CD14-positive monocyte (primary cell): ENCODE measurements at regions of chr17 and their contacts with region 1.

Region 1: GRCh38 chr17:16456742-16457316 is 35.2 kb downstream of the LRRC75A start:
- DNase-seq: no peak
- H3K4me3 ChIP-seq: no peak overlapping the region
- H3K4me3 Mint-ChIP-seq: no peak overlapping the region
- H3K27ac ChIP-seq: no peak overlapping the region
- H3K27ac Mint-ChIP-seq: peak overlapping the region in 1 of 7 donors; percentile 26
- H3K4me1 ChIP-seq: no peaks in the 10 kb centered on the region
- H3K4me1 Mint-ChIP-seq: peaks cover 13% of the 10 kb centered on the region
- H3K27me3 ChIP-seq: no peaks in the 10 kb centered on the region
- H3K27me3 Mint-ChIP-seq: no peaks in the 10 kb centered on the region
- CTCF ChIP-seq: no peak

Region 2: GRCh38 chr17:16521070-16521727 is 64.4 kb after region 1 on chr17:
- intact Hi-C with region 1: loop called (anchors 2 to 5 kb)
- DNase-seq: peak; percentile 82 to 89 (median 86)
- H3K4me3 ChIP-seq: no peak overlapping the region
- H3K4me3 Mint-ChIP-seq: no peak overlapping the region
- H3K27ac ChIP-seq: peak overlapping the region in 1 of 2 donors; percentile 66
- H3K27ac Mint-ChIP-seq: peak overlapping the region; percentile 42 to 93 (median 86)
- H3K4me1 ChIP-seq: peaks cover 11 to 19% of the 10 kb centered on the region in 2 donors
- H3K4me1 Mint-ChIP-seq: peaks cover 18% of the 10 kb centered on the region
- H3K27me3 ChIP-seq: no peaks in the 10 kb centered on the region
- H3K27me3 Mint-ChIP-seq: peaks cover 5 to 11% (median 9%) of the 10 kb centered on the region in 3 donors
- CTCF ChIP-seq: peak; percentile 90

Region 3: DNA sequence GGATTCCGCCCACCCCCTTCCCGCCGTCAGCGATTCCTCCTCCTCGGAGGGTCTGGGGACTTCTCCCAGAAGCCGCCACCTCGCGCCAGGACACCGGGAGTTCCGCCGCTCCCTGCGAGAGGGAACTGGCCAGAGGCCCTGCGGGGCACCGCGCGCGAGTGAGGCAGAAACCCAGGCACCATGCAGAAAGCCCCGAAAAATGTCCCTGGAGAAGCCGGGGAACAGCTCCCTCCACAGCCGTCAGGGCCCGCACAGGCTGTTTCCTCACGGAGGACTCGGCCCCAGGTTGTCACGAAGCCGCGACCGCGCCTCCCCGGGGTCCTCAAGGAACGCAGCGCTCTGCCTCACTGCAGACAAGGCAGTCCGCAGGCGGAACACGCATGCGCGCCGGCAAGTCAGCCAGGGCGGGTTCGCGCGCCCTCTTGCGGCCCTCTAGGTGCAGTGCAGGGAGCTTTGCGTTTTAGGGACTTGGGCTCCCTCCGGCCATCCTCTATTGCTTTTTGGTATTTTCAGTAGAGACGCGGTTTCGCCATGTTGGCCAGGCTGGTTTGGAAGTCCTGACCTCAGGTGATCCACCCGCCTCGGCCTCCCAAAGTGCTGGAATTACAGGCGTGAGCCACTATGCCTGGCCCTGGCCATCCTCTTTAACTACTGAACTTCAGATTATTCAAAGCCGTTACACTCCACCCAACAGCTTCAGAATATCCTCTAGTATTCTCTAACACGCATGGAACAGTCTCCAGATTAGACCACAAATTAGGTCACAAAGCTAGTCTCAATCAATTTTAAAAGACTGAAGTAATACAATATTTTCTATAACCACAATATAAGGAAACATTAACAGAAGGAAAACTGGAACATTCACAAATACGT is 132.5 kb after region 1 on chr17:
- intact Hi-C with region 1: loop called in 1 of 2 experiments (anchors 10 kb)
- DNase-seq: peak; percentile 82 to 91 (median 88)
- H3K4me3 ChIP-seq: peak overlapping the region; percentile 28 to 77 (median 56)
- H3K4me3 Mint-ChIP-seq: peak overlapping the region; percentile 74 to 84
- H3K27ac ChIP-seq: no peak overlapping the region
- H3K27ac Mint-ChIP-seq: no peak overlapping the region
- H3K4me1 ChIP-seq: peaks cover 12 to 13% of the 10 kb centered on the region in 2 donors
- H3K4me1 Mint-ChIP-seq: peaks cover 24% of the 10 kb centered on the region
- H3K27me3 ChIP-seq: peaks cover 15 to 34% of the 10 kb centered on the region in 2 donors
- H3K27me3 Mint-ChIP-seq: peaks cover 33 to 43% (median 34%) of the 10 kb centered on the region in 3 donors
- CTCF ChIP-seq: peak; percentile 95